Keratinocyte (primary cell): ENCODE measurements at regions of chr13 and their contacts with region 1.

Region 1: GRCh38 chr13:100789968-100790367 is 115.4 kb upstream of the TMTC4 start:
- DNase-seq: no peak
- H3K4me3 ChIP-seq: no peak overlapping the region
- H3K27ac ChIP-seq: no peak overlapping the region
- H3K4me1 ChIP-seq: peaks cover 5% of the 10 kb centered on the region
- H3K27me3 ChIP-seq: no peaks in the 10 kb centered on the region
- CTCF ChIP-seq: no peak

Region 2: GRCh38 chr13:100828226-100828625 is 38.3 kb after region 1 on chr13:
- dilution Hi-C with region 1: loop called (anchors 5 kb)
- DNase-seq: no peak
- H3K4me3 ChIP-seq: no peak overlapping the region
- H3K27ac ChIP-seq: no peak overlapping the region
- H3K4me1 ChIP-seq: no peaks in the 10 kb centered on the region
- H3K27me3 ChIP-seq: no peaks in the 10 kb centered on the region
- CTCF ChIP-seq: peak in 1 of 3 experiments; percentile 23